ENCODE measurements at regions of chrX and their contacts with region 1.

Region 1: GRCh38 chrX:101407748-101408531 is at the starts of genes GLA and HNRNPH2:
- DNase-seq: peak; percentile 85 to 96 (median 91)
- H3K4me3 ChIP-seq: peak within 1 kb of the TSS; percentile 89 to 99
- H3K4me3 Mint-ChIP-seq: peak within 1 kb of the TSS; percentile 85 to 96 (median 94)
- H3K27ac ChIP-seq: peak within 1 kb of the TSS; percentile 97
- H3K27ac Mint-ChIP-seq: peak within 1 kb of the TSS; percentile 95 to 99 (median 98)
- H3K4me1 ChIP-seq: peaks cover 27% of the 10 kb centered on the region
- H3K4me1 Mint-ChIP-seq: peaks cover 14 to 36% (median 24%) of the 10 kb centered on the region in 4 donors
- H3K27me3 ChIP-seq: no peaks in the 10 kb centered on the region
- H3K27me3 Mint-ChIP-seq: no peaks in the 10 kb centered on the region
- total RNA-seq, gene GLA: 13.1 TPM
- total RNA-seq, gene HNRNPH2: 40.1 to 40.9 TPM

Region 2: DNA sequence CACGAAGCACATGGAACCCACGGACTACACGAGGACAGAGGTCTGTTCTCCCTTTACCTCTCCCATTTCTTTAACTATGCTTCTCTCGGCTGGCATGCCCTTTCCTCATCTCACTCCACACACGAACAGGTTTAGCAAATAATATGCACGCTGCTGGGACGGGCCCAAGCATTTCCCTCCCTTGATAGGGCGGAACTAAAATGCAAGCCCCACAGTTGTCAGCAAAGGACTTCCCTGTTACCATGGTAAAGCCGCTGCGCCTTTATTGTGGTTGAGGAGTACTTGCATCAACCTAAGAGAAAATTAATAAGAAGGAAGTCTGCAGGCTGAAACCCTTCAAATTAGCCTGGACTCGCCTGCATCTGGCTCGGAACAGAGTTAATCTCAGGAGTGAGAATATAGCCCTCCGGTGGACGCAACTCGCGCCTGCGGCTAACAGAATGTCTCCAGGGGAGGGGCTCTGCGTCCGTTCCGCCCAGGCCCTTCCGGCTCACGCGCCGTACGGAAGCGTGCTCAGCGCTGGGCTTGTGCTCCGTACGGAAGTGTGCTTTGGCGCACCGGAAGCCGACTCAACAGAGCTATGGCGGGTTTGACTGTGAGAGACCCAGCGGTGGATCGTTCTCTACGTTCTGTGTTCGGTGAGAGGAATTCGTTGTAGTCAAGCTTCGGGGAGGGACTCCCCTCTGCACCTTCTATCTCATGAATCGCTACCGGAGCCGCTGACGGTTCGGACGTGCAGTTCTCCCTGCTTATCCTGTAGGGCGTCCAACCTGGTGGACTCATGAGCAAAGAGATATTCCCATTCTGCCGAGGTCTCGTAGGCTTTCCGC is 587.9 kb before region 1 on chrX and contains the start of gene CSTF2:
- CTCF ChIA-PET with region 1: no interaction called
- POLR2A ChIA-PET with region 1: no interaction called
- intact Hi-C with region 1: loop called (anchors 10 kb)
- DNase-seq: peak; percentile 82 to 90 (median 84)
- H3K4me3 ChIP-seq: peak within 1 kb of the TSS; percentile 74 to 81
- H3K4me3 Mint-ChIP-seq: peak within 1 kb of the TSS; percentile 84 to 92 (median 88)
- H3K27ac ChIP-seq: peak within 1 kb of the TSS; percentile 83
- H3K27ac Mint-ChIP-seq: peak within 1 kb of the TSS; percentile 80 to 99 (median 95)
- H3K4me1 ChIP-seq: peaks cover 4% of the 10 kb centered on the region
- H3K4me1 Mint-ChIP-seq: peaks cover 5 to 15% (median 8%) of the 10 kb centered on the region in 4 donors
- H3K27me3 ChIP-seq: no peaks in the 10 kb centered on the region
- H3K27me3 Mint-ChIP-seq: peaks cover 0 to 2% of the 10 kb centered on the region in 2 donors
- total RNA-seq, gene CSTF2: 14.7 to 15.2 TPM

Region 3: GRCh38 chrX:101348452-101349192 is 59.3 kb before region 1 on chrX and contains the start of gene TIMM8A:
- CTCF ChIA-PET with region 1: no interaction called
- POLR2A ChIA-PET with region 1: interaction called, 8 read pairs
- intact Hi-C with region 1: loop called (anchors 1 kb)
- DNase-seq: peak; percentile 73 to 78 (median 74)
- H3K4me3 ChIP-seq: peak within 1 kb of the TSS; percentile 69 to 74
- H3K4me3 Mint-ChIP-seq: peak within 1 kb of the TSS; percentile 88 to 94 (median 91)
- H3K27ac ChIP-seq: peak within 1 kb of the TSS; percentile 72
- H3K27ac Mint-ChIP-seq: peak within 1 kb of the TSS; percentile 85 to 97 (median 92)
- H3K4me1 ChIP-seq: peaks cover 19% of the 10 kb centered on the region
- H3K4me1 Mint-ChIP-seq: peaks cover 5 to 21% (median 11%) of the 10 kb centered on the region in 4 donors
- H3K27me3 ChIP-seq: no peaks in the 10 kb centered on the region
- H3K27me3 Mint-ChIP-seq: no peaks in the 10 kb centered on the region
- total RNA-seq, gene TIMM8A: 12.0 to 13.3 TPM

Region 4: DNA sequence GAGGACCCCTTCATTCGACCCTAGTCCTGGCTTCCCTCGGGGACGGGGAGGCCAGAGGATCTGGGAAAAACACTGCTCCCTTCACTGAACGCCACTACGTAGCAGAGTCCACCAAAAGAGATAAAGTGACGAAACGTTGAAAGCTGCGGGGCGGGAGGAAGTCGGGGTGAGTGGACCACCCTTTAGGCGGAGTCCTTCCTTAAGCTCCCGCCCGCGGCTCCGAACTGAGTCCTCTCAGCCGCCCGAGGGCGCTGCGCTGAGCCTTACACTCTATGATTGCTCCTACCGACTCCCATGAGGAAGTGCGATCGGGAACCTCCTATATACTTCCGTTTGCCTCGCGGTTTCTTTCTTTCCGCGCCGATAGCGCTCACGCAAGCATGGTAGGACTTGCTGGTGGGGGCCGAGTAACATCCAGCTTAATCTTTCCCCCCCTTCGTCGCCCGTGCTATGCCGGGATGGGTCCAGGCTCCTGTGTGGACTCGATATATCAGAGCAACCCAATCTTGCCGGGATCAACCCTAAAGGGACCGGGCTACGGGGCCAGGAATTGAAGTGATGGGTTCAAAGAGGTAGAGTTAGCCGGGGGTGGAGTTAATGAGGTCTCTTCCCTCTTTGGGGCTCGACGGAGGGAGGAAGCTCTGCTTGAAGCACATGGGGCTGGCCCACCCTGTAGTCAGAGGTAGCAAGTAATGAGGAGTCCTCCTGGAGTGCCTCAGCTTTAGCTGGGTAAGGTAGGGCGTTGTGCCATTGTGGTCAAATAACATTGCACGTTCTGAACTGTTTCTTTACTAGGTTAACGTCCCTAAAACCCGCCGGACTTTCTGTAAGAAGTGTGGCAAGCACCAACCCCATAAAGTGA is 17.0 kb before region 1 on chrX and contains the start of gene RPL36A:
- CTCF ChIA-PET with region 1: interaction called, 14 read pairs
- POLR2A ChIA-PET with region 1: interaction called, 16 read pairs
- intact Hi-C with region 1: loop called (anchors 1 kb)
- DNase-seq: peak; percentile 72 to 84 (median 76)
- H3K4me3 ChIP-seq: peak within 1 kb of the TSS; percentile 47 to 82
- H3K4me3 Mint-ChIP-seq: peak within 1 kb of the TSS; percentile 88 to 98 (median 93)
- H3K27ac ChIP-seq: peak within 1 kb of the TSS; percentile 68
- H3K27ac Mint-ChIP-seq: peak within 1 kb of the TSS; percentile 89 to 98 (median 96)
- H3K4me1 ChIP-seq: peaks cover 15% of the 10 kb centered on the region
- H3K4me1 Mint-ChIP-seq: peaks cover 10 to 39% (median 15%) of the 10 kb centered on the region in 4 donors
- H3K27me3 ChIP-seq: no peaks in the 10 kb centered on the region
- H3K27me3 Mint-ChIP-seq: no peaks in the 10 kb centered on the region
- total RNA-seq, gene RPL36A: 380 to 428 TPM